ENCODE measurements at regions of chr12 and their contacts with region 1.

Region 1: DNA sequence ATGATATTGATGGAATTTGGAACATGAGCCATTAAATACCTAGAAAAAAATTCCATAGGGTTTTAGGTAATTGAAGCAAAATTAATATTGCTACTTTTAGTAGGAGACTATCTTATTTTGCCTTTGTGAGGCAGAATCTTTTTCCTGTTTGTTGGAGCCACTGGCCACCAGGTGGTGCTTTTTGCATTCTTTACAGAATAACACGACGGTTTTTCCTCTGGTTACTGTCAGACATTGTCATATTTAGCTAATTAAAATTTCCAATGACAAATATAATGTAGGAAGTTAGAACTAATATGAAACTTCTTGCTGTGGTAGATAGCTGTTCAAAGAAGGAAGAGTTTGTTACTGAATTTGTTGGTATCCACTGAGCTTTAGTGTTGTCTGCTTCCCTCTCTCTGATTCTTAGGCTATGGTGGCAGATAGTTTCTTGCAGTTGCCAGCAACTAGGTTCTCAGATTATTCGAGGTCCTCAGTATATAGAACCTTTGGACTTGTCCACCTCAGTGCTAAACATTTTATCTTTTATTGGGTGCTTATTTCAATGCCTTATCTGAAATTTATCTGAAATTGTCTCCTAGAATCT is 25.7 kb downstream of the RAB21 start:
- DNase-seq: peak; percentile 19
- H3K4me3 ChIP-seq: no peak overlapping the region
- H3K27ac ChIP-seq: no peak overlapping the region
- H3K4me1 ChIP-seq: no peaks in the 10 kb centered on the region
- H3K27me3 ChIP-seq: no peaks in the 10 kb centered on the region
- CTCF ChIP-seq: peak; percentile 66 to 70

Region 2: DNA sequence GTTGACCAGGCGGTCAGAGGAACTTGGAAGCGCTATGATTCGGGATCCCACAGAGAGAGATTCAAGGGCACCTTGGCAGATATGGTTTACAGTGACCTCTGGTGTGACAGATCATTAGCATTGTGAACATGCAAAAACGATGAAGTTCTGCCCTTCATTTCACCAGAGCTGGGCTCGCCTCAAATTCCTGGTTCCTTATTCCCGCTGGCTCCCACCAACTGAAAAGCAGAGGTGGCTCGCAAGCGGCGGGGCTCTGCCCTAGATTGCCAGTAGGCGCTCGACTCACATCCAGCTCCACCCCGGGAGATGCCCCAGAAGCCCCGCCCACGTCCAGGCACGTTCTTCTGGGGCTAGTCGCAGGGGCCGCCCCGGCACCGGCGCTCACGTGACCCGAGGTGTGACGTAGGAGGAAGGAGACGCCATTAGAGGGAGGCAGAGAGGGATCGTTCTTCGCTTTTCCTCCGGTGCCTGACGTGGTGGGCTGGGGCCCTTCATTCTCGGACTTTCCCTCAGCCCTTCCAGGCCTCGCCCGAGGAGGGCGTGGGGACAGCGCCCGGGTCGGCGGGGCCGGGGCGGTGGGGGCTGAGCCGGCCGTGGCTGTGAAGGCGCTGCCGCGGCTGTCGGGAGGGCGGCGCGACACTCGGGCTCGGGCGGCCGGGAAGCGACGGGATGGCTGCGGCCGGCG is 25.7 kb before region 1 on chr12 and contains the start of gene RAB21:
- CTCF ChIA-PET with region 1: no interaction called
- dilution Hi-C with region 1: no loop called
- in situ Hi-C with region 1: no loop called
- intact Hi-C with region 1: no loop called
- DNase-seq: peak; percentile 97
- H3K4me3 ChIP-seq: peak within 1 kb of the TSS; percentile 66 to 86 (median 72)
- H3K27ac ChIP-seq: peak within 1 kb of the TSS; percentile 88
- H3K4me1 ChIP-seq: peaks cover 5% of the 10 kb centered on the region
- H3K27me3 ChIP-seq: no peaks in the 10 kb centered on the region
- CTCF ChIP-seq: peak in 1 of 2 donors; percentile 30
- total RNA-seq, gene RAB21: 13.2 to 76.6 TPM

Region 3: GRCh38 chr12:71846322-71846940 is 66.1 kb after region 1 on chr12:
- CTCF ChIA-PET with region 1: no interaction called
- dilution Hi-C with region 1: no loop called
- in situ Hi-C with region 1: no loop called
- intact Hi-C with region 1: loop called (anchors 1 kb)
- DNase-seq: peak; percentile 35
- H3K4me3 ChIP-seq: no peak overlapping the region
- H3K27ac ChIP-seq: no peak overlapping the region
- H3K4me1 ChIP-seq: no peaks in the 10 kb centered on the region
- H3K27me3 ChIP-seq: no peaks in the 10 kb centered on the region
- CTCF ChIP-seq: peak; percentile 55 to 60

Measured in mammary epithelial cell (primary cell).